SK-N-SH (cell line): ENCODE measurements at regions of chrX and their contacts with region 1.

Region 1: DNA sequence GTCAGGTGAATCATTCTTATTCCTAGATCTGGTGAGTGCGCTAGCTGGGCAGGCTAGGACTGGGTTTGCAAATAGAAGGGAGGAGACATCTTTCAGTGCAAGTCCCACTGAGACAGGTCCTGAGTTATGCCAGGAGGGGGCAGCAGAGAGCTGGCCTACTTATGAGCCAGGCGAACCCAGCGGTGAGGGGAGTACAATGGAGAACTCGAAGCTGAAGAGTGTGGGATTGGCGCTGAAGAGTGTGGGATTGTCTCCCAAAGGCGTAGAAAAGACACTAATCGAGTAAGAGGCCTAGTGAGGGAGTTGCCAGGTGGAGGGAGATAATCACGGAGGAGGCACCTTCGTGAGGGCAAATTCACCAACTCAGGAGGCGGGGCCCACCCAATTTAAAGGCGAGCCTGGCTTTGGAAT is 91.7 kb upstream of the CXorf66 start:
- DNase-seq: peak; percentile 65
- H3K4me3 ChIP-seq: no peak overlapping the region
- H3K27ac ChIP-seq: no peak overlapping the region
- H3K4me1 ChIP-seq: no peaks in the 10 kb centered on the region
- H3K27me3 ChIP-seq: peaks cover 8% of the 10 kb centered on the region; the same call in 1 of the 2 replicates
- CTCF ChIP-seq: peak; percentile 94
- EP300 ChIP-seq: no peak
- RAD21 ChIP-seq: peak; percentile 63

Region 2: DNA sequence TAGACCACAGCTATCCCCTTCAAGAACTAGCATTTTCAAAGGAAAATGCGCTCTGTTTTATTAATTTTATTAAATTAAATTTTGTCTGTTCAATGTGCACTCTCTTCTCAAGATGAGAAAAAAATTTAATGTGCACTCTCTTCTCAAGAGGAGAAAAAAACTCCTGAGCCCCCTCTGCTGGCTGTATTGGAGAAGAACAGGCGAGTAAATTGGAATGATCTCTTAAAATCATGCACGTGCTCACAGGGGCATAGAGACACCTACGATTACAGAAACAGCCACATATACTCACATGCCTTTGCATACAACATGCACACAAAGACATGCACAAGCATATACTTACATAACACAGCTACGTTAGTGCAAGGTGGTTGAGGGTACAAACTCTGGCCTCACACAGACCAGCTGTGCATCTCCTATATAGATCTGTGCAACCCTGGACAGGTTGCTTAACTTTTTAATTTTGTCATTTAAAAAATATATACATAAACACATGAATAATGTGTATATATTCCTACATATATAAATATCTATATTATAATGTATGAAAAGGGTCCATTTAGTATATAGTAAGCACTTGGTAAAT is 84.5 kb after region 1 on chrX:
- CTCF ChIA-PET with region 1: interaction called, 16 read pairs
- POLR2A ChIA-PET with region 1: no interaction called
- DNase-seq: peak; percentile 44
- H3K4me3 ChIP-seq: no peak overlapping the region
- H3K27ac ChIP-seq: no peak overlapping the region
- H3K4me1 ChIP-seq: no peaks in the 10 kb centered on the region
- H3K27me3 ChIP-seq: peaks cover 4% of the 10 kb centered on the region; the same call in 1 of the 2 replicates
- CTCF ChIP-seq: peak; percentile 81
- EP300 ChIP-seq: no peak
- RAD21 ChIP-seq: peak; percentile 58

Region 3: DNA sequence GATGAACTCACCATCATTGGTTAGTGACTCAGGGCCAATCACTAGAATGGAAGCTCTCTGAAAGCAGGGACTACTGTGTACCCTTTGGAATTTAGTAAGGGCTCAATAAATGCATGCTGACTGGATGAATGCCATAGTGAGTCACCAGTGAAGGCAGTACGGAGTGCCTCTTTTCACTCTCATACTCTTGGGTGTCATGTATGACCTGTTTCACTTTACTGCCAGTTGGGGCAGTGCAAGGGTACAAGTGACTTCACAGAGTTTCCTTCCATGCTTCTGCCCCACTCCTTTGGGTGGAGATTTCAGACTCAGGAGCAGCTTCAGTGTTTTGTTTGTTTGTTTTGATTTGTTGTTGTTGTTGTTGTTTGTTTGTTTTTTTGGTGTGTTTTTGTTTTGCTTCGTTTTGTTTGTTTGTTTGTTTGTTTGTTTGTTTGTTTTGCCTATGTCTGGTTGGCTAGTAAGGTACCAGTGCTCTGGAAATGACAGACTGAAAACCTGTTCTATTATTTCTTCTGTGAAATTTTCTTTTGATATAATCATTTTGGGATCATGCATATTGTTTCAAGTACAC is 390.2 kb after region 1 on chrX:
- CTCF ChIA-PET with region 1: no interaction called
- POLR2A ChIA-PET with region 1: no interaction called
- DNase-seq: no peak
- H3K4me3 ChIP-seq: no peak overlapping the region
- H3K27ac ChIP-seq: no peak overlapping the region
- H3K4me1 ChIP-seq: no peaks in the 10 kb centered on the region
- H3K27me3 ChIP-seq: no peaks in the 10 kb centered on the region
- CTCF ChIP-seq: no peak
- EP300 ChIP-seq: no peak
- RAD21 ChIP-seq: no peak